Stomach (tissue), 19 donors: ENCODE measurements at regions of chr6 and their contacts with region 1.

Region 1: DNA sequence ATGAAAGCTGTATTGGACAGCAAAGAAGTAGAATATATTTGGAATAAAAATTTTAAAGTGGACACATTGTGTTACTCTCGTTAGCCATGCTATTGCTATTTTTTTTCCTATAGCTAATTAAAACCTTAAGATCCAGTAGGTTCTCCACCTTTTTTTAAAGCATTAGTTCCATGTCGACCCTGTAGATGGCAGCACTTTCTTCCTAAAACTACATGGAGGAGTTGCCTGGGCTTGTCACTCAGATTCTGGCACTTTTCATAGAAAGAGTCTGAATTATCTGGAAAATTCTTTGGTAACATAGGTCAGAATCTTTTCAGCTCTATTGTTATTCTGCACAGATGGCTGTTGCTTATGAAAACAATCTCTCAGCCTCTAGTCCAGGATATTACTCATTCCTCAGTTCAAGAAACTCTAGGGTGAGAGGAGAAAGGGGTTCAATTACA is 42.0 kb upstream of the ESR1 start:
- DNase-seq: peak in 1 of 2 donors; percentile 75
- H3K4me3 ChIP-seq: no peak overlapping the region
- H3K27ac ChIP-seq: no peak overlapping the region
- H3K4me1 ChIP-seq: peaks cover 0 to 24% (median 10%) of the 10 kb centered on the region in 4 donors
- H3K27me3 ChIP-seq: no peaks in the 10 kb centered on the region
- CTCF ChIP-seq: peak in 4 of 7 experiments; percentile 55 to 80 (median 70)
- EP300 ChIP-seq: no peak
- POLR2A ChIP-seq: no peak

Region 2: GRCh38 chr6:152124429-152125074 is 359.1 kb after region 1 on chr6:
- intact Hi-C with region 1: loop called (anchors 10 kb)
- DNase-seq: peak in 1 of 2 donors; percentile 61
- H3K4me3 ChIP-seq: no peak overlapping the region
- H3K27ac ChIP-seq: no peak overlapping the region
- H3K4me1 ChIP-seq: peaks cover 0 to 7% (median 3%) of the 10 kb centered on the region in 4 donors
- H3K27me3 ChIP-seq: no peaks in the 10 kb centered on the region
- CTCF ChIP-seq: peak in 5 of 7 experiments; percentile 55 to 71 (median 61)
- EP300 ChIP-seq: no peak
- POLR2A ChIP-seq: no peak